ENCODE measurements at regions of chr5 and their contacts with region 1.

Region 1: DNA sequence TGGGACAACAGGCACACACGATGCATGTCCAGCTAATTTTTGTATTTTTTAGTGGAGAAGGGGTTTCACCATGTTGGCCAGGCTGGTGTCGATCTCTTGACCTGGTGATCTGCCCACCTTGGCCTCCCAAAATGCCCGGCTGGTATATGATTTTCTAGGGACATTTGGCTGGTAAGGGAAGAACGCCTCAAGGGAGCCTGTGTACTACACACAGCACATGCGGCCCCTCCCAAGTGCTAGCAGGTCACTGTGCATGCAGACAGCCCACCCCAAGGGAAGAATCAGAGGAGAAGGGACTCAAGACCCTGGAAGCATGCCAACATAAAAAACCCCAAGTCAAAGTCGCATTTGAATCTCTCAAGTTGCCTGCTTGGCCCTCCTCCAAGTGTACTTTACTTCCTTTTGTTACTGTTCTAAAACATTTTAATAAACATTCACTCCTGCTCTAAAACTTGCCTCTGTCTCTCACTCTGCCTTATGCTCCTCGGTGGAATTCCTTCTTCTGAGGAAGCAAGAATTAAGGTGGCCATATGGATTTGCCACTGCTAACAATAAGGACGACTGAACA is 24.3 kb upstream of the OTULINL start:
- DNase-seq: peak in 1 of 9 experiments; percentile 19
- ATAC-seq: no peak
- H3K4me3 ChIP-seq: no peak overlapping the region
- H3K4me3 Mint-ChIP-seq: no peak overlapping the region
- H3K27ac ChIP-seq: no peak overlapping the region
- H3K27ac Mint-ChIP-seq: no peak overlapping the region
- H3K4me1 ChIP-seq: peaks cover 32% of the 10 kb centered on the region
- H3K4me1 Mint-ChIP-seq: peaks cover 36% of the 10 kb centered on the region
- H3K27me3 ChIP-seq: no peaks in the 10 kb centered on the region
- H3K27me3 Mint-ChIP-seq: peaks cover 3% of the 10 kb centered on the region
- CTCF ChIP-seq: no peak

Region 2: DNA sequence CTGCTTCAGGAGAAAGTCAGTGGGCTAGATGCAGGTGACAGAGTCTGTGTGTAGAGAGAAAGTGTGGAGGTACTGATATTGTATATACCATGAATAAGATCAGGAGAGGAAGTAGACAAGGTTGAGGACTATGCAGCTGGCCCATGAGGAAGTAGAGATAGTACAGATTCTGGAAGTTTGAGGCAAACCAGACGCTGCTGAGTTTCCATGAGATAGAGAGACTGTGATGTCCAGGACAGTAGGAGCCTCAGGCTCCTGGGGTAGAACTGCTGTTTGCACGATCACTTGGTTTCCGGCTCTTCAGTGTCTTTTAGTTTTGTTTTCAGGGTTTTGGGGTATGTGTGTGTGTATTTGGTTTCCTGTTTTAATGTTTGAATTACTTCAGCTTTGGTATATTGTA is 37.9 kb after region 1 on chr5:
- CTCF ChIA-PET with region 1: no interaction called
- POLR2A ChIA-PET with region 1: no interaction called
- intact Hi-C with region 1: loop called in 1 of 2 experiments (anchors 5 kb)
- DNase-seq: peak in 7 of 9 experiments; percentile 28 to 79 (median 39)
- ATAC-seq: peak; percentile 75
- H3K4me3 ChIP-seq: peak overlapping the region; percentile 16 to 46
- H3K4me3 Mint-ChIP-seq: peak overlapping the region; percentile 75
- H3K27ac ChIP-seq: peak overlapping the region; percentile 52 to 86
- H3K27ac Mint-ChIP-seq: peak overlapping the region; percentile 93
- H3K4me1 ChIP-seq: peaks cover 82% of the 10 kb centered on the region
- H3K4me1 Mint-ChIP-seq: peaks cover 92% of the 10 kb centered on the region
- H3K27me3 ChIP-seq: no peaks in the 10 kb centered on the region
- H3K27me3 Mint-ChIP-seq: no peaks in the 10 kb centered on the region
- CTCF ChIP-seq: no peak

Region 3: GRCh38 chr5:14608169-14608568 is 50.9 kb after region 1 on chr5:
- CTCF ChIA-PET with region 1: interaction called, 3 read pairs
- POLR2A ChIA-PET with region 1: no interaction called
- intact Hi-C with region 1: loop called in 1 of 2 experiments (anchors 5 kb)
- DNase-seq: no peak
- ATAC-seq: no peak
- H3K4me3 ChIP-seq: no peak overlapping the region
- H3K4me3 Mint-ChIP-seq: no peak overlapping the region
- H3K27ac ChIP-seq: no peak overlapping the region
- H3K27ac Mint-ChIP-seq: peak overlapping the region; percentile 7
- H3K4me1 ChIP-seq: no peaks in the 10 kb centered on the region
- H3K4me1 Mint-ChIP-seq: peaks cover 4% of the 10 kb centered on the region
- H3K27me3 ChIP-seq: no peaks in the 10 kb centered on the region
- H3K27me3 Mint-ChIP-seq: no peaks in the 10 kb centered on the region
- CTCF ChIP-seq: no peak